CD8-positive, alpha-beta memory T cell (primary cell): ENCODE measurements at regions of chr2 and their contacts with region 1.

Region 1: GRCh38 chr2:85551698-85552678 is 9.3 kb downstream of the GGCX start:
- DNase-seq: peak; percentile 79 to 91 (median 84)
- H3K4me3 ChIP-seq: no peak overlapping the region
- H3K4me3 Mint-ChIP-seq: peak overlapping the region in 1 of 7 donors; percentile 1
- H3K27ac ChIP-seq: no peak overlapping the region
- H3K27ac Mint-ChIP-seq: peak overlapping the region in 5 of 8 donors; percentile 11 to 61 (median 23)
- H3K4me1 ChIP-seq: no peaks in the 10 kb centered on the region
- H3K4me1 Mint-ChIP-seq: peaks cover 3 to 6% (median 5%) of the 10 kb centered on the region in 3 donors
- H3K27me3 ChIP-seq: no peaks in the 10 kb centered on the region
- H3K27me3 Mint-ChIP-seq: no peaks in the 10 kb centered on the region

Region 2: DNA sequence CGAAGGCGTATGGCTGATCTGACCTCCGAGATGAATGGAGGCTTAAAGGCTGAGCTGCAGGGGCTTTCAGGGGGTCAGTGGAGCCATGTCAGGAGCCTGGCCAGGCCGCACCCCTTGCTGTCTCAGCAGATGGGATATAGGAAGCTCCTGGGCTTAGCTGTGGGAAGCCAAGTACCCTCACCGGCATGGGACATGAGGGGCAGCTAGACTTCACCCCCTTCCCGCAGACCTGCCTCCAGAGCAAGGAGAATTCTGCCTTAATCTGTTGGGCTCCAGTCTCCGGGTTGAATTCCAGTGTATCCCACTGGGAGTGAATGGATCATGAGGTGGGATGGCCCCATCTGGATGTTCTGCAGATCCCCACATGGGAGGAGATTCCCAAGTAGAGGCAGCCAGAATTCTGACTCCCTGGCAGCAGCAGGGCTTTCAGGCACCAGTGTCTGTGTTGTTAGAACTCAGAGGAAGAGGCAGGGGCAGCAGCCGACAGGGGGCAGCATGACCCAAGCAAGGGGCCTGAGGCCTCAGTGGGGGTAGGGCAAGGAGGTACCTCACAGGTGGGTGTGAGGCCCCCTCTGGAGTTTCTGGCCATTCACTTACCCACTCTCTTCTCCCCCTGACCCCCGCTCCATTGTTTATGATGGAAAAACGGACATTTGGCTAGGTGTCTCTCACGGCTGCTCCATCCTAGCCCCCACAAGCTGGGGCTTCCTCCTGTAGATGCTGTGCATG is 160.9 kb before region 1 on chr2:
- CTCF ChIA-PET with region 1: interaction called, 51 read pairs
- POLR2A ChIA-PET with region 1: no interaction called
- DNase-seq: peak; percentile 48 to 73 (median 57)
- H3K4me3 ChIP-seq: no peak overlapping the region
- H3K4me3 Mint-ChIP-seq: no peak overlapping the region
- H3K27ac ChIP-seq: no peak overlapping the region
- H3K27ac Mint-ChIP-seq: peak overlapping the region in 2 of 8 donors; percentile 69 to 75
- H3K4me1 ChIP-seq: peaks cover 8% of the 10 kb centered on the region
- H3K4me1 Mint-ChIP-seq: peaks cover 5 to 7% (median 5%) of the 10 kb centered on the region in 3 donors
- H3K27me3 ChIP-seq: no peaks in the 10 kb centered on the region
- H3K27me3 Mint-ChIP-seq: no peaks in the 10 kb centered on the region

Region 3: DNA sequence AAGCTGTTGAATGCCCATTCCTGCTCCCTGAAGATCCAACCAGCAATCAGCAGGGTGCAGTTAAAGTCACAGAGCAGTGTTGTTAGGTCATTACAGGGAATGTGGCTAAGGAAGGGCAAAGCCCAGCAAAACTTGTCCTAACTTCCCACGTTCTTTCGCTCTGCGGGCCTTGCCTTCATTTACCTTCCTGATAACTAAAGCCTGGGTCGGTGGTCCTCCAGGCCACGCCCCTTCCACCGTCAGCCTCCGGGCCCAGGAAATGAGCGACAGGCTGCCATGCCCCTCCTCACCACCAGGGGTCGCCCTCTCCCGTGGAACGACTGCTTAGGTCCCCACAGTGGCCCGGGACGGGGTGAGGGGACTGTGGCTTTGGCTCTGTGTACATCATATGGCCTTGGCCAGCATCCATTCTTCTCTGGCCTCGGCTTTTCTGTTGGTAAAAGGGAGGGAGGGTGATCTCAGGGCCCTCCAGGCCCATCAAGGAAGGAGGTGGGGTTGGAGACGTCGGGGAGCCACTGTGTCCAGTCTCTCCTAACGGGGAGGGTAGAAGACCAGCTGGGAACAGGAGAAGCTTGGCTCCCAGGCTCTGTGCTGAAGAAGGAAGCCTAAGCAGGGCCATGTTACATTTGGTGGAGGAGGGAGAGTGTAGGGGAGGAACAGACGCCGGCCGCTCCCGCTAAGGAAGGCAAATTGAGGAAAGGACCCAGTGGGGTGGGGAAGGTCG is 131.3 kb before region 1 on chr2:
- CTCF ChIA-PET with region 1: interaction called, 327 read pairs
- POLR2A ChIA-PET with region 1: interaction called, 24 read pairs
- DNase-seq: peak; percentile 80 to 90 (median 83)
- H3K4me3 ChIP-seq: peak overlapping the region; percentile 29
- H3K4me3 Mint-ChIP-seq: peak overlapping the region; percentile 57 to 90 (median 74)
- H3K27ac ChIP-seq: peak overlapping the region; percentile 45
- H3K27ac Mint-ChIP-seq: peak overlapping the region in 7 of 8 donors; percentile 18 to 97 (median 61)
- H3K4me1 ChIP-seq: peaks cover 27% of the 10 kb centered on the region
- H3K4me1 Mint-ChIP-seq: peaks cover 12 to 25% (median 16%) of the 10 kb centered on the region in 3 donors
- H3K27me3 ChIP-seq: no peaks in the 10 kb centered on the region
- H3K27me3 Mint-ChIP-seq: peaks cover 0 to 1% of the 10 kb centered on the region in 2 donors

Region 4: DNA sequence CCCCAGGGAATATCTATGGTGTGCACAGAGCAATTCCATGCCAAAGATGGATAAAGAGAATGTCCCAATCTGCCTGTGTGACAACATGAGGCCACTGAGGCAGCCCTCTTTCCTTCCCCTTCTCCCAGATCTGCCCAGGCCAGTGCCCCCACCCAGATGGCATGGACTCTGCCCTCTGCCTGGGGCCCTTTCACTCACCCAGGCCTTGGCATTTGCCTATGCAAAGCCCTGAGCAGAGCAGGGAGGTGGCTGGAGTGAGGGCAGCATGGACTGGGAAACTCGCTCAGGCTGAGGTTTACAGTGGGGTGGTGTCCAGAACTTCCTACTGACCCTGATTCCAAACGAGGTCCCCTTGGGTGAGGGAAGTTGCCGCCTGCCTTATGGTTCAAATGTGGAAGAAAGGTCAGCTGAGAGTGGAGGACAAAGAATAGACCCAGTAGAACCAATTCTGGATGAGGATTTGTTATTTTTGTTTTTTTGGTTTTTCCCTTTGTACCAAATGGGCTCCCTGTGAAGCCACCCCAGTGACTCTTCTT is 124.6 kb before region 1 on chr2:
- CTCF ChIA-PET with region 1: interaction called, 327 read pairs
- POLR2A ChIA-PET with region 1: no interaction called
- DNase-seq: no peak
- H3K4me3 ChIP-seq: no peak overlapping the region
- H3K4me3 Mint-ChIP-seq: no peak overlapping the region
- H3K27ac ChIP-seq: no peak overlapping the region
- H3K27ac Mint-ChIP-seq: no peak overlapping the region
- H3K4me1 ChIP-seq: no peaks in the 10 kb centered on the region
- H3K4me1 Mint-ChIP-seq: no peaks in the 10 kb centered on the region
- H3K27me3 ChIP-seq: no peaks in the 10 kb centered on the region
- H3K27me3 Mint-ChIP-seq: no peaks in the 10 kb centered on the region

Region 5: GRCh38 chr2:85437488-85438284 is 114.3 kb before region 1 on chr2:
- CTCF ChIA-PET with region 1: interaction called, 10 read pairs
- POLR2A ChIA-PET with region 1: interaction called, 3 read pairs
- DNase-seq: peak; percentile 63 to 83 (median 75)
- H3K4me3 ChIP-seq: peak overlapping the region; percentile 32
- H3K4me3 Mint-ChIP-seq: peak overlapping the region; percentile 75 to 94 (median 88)
- H3K27ac ChIP-seq: peak overlapping the region; percentile 53
- H3K27ac Mint-ChIP-seq: peak overlapping the region; percentile 91 to 100 (median 95)
- H3K4me1 ChIP-seq: peaks cover 22% of the 10 kb centered on the region
- H3K4me1 Mint-ChIP-seq: peaks cover 12 to 27% (median 17%) of the 10 kb centered on the region in 3 donors
- H3K27me3 ChIP-seq: no peaks in the 10 kb centered on the region
- H3K27me3 Mint-ChIP-seq: peaks cover 0 to 1% of the 10 kb centered on the region in 2 donors